Caco-2 (cell line): ENCODE measurements at regions of chr2 and their contacts with region 1.

Region 1: DNA sequence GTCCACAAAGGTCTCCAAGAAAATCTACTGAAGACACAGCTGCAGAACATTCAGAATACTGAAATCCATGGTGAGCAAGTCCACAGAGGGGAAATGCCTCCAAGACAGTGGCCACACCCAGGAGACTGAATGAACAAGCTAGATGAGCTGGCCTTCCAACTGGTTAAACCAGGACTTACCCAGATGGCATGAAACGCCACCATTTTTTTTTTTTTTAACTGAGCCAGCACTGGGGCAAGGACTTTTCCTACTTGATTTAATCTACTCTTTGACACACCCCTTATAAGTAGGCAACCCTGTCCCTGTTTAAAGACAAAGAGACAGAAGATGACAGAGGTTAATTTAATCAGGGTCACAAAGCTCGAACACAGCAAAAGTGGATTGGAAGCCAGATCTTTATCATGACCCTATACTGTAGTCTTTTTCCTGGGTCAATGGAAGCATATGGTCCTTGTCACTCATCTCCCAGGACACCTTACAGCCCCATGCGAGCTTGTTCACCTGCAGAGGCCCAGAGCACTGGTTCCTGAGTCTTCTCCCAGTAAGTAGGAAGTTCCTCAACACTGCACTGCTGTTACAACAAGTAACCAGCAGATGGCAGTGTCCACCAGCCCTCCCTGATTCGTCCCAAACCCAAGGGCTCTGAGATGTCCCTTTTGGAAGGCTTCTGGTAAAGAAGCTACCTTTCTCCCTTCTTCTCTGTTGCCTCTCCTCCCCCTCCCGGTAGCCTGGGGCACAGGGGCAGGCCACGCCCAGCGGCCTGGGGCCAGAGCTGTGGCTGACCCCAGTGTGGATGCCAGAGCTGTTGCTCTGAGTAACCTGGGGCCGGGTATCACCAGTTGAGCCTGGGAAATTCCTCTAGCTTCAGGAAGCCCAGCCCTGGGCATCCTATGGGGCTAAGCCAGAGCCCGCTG is 5.6 kb upstream of the GDF7 start:
- DNase-seq: peak; percentile 77 to 83
- H3K4me3 ChIP-seq: no peak overlapping the region
- H3K4me3 Mint-ChIP-seq: no peak overlapping the region
- H3K27ac Mint-ChIP-seq: no peak overlapping the region
- H3K4me1 ChIP-seq: peaks cover 10% of the 10 kb centered on the region; the same call in 1 of the 2 replicates
- H3K4me1 Mint-ChIP-seq: no peaks in the 10 kb centered on the region
- H3K27me3 ChIP-seq: no peaks in the 10 kb centered on the region
- H3K27me3 Mint-ChIP-seq: peaks cover 4% of the 10 kb centered on the region
- CTCF ChIP-seq: peak; percentile 95 to 96

Region 2: GRCh38 chr2:20675701-20676352 is 14.5 kb after region 1 on chr2:
- CTCF ChIA-PET with region 1: interaction called, 281 read pairs
- POLR2A ChIA-PET with region 1: interaction called, 13 read pairs
- intact Hi-C with region 1: loop called (anchors 1 kb)
- DNase-seq: peak; percentile 79 to 80
- H3K4me3 ChIP-seq: no peak overlapping the region
- H3K4me3 Mint-ChIP-seq: peak overlapping the region; percentile 42
- H3K27ac Mint-ChIP-seq: peak overlapping the region; percentile 69
- H3K4me1 ChIP-seq: peaks cover 15% of the 10 kb centered on the region
- H3K4me1 Mint-ChIP-seq: peaks cover 25% of the 10 kb centered on the region
- H3K27me3 ChIP-seq: no peaks in the 10 kb centered on the region
- H3K27me3 Mint-ChIP-seq: no peaks in the 10 kb centered on the region
- CTCF ChIP-seq: peak in 1 of 2 experiments; percentile 32

Region 3: DNA sequence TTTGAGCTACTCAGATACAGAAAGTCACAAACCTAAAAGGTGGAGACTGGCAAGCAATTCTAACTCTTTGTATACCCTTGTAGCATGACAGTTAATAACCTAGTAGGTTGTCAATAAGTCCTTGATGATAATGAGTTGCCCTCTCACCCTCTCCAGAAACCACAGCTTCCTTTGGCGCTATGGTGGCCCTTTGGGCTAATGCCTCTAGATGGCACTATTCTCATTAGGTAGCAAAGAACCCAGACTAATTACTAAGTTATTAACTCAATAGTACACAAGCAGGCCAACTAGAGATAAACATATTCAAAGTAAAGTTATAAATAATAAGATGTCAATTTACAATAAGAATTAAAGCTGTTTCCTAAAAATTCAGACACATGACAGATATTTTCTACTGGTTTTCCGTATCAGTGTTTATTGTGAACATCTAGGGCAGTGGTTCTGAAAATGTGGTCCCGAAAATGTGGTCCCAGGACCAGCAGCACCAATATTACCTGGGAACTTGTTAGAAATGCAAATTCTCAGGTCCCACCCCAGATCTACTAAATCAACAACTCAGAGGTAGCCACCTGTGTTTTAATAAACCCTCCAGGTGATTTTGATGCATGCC is 120.4 kb after region 1 on chr2:
- CTCF ChIA-PET with region 1: interaction called, 15 read pairs
- POLR2A ChIA-PET with region 1: no interaction called
- intact Hi-C with region 1: no loop called
- DNase-seq: peak in 1 of 2 experiments; percentile 43
- H3K4me3 ChIP-seq: no peak overlapping the region
- H3K4me3 Mint-ChIP-seq: no peak overlapping the region
- H3K27ac Mint-ChIP-seq: no peak overlapping the region
- H3K4me1 ChIP-seq: peaks cover 7% of the 10 kb centered on the region; the same call in 1 of the 2 replicates
- H3K4me1 Mint-ChIP-seq: peaks cover 15% of the 10 kb centered on the region
- H3K27me3 ChIP-seq: no peaks in the 10 kb centered on the region
- H3K27me3 Mint-ChIP-seq: no peaks in the 10 kb centered on the region
- CTCF ChIP-seq: peak; percentile 57 to 75

Region 4: DNA sequence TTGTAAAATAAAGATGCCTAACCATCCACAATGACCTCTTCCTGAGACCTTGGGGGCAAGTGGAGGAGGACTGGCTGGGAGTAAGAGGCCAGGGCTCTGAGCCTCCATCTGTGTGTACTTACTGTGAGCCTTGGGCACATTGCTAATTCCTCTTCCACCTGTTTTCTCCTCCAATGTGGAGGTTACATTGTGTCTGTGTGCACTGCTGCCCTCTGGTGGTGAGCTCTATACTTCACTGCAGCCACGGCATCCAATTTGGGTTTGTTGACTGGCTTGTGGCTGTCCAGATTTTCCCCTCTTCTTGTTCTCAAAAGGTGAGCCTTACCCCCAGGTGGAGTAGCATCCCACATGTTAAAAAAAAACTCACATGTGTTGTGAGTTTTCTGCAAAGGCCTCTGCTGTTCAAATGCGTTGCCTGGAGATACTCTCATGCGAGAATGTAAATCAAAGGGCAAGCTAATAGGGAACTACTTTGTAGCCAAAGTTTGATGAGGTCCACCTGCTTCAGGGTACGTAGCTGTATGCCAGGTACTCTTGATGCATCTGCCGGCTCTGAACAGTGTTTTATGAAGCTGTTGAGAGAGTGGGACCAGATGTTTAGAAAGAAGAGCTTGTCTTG is 301.7 kb after region 1 on chr2:
- CTCF ChIA-PET with region 1: interaction called, 41 read pairs
- POLR2A ChIA-PET with region 1: no interaction called
- intact Hi-C with region 1: loop called (anchors 1 kb)
- DNase-seq: peak; percentile 73 to 80
- H3K4me3 ChIP-seq: no peak overlapping the region
- H3K4me3 Mint-ChIP-seq: no peak overlapping the region
- H3K27ac Mint-ChIP-seq: no peak overlapping the region
- H3K4me1 ChIP-seq: no peaks in the 10 kb centered on the region
- H3K4me1 Mint-ChIP-seq: no peaks in the 10 kb centered on the region
- H3K27me3 ChIP-seq: no peaks in the 10 kb centered on the region; the same call in 1 of the 2 replicates
- H3K27me3 Mint-ChIP-seq: peaks cover 5% of the 10 kb centered on the region
- CTCF ChIP-seq: peak; percentile 83 to 90

Region 5: DNA sequence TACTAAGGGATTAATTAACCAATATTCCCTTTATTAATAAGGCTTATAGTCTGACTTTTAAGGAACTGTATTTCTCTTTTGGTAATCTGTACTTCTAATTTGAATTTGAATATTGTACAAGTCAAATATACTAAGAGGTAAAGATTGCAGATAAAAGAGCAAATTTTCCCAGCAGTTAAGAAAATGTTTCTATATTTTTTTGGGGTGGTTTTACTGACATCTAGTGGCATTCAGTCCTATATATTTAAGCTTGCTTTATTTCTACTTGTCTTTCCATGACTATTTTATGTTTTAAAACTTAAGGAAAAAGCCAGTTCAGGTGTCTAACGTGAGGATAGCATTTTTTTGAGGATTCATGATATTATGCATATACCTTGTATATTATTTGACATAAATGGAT is 504.0 kb after region 1 on chr2:
- CTCF ChIA-PET with region 1: interaction called, 4 read pairs
- POLR2A ChIA-PET with region 1: no interaction called
- intact Hi-C with region 1: loop called (anchors 1 kb)
- DNase-seq: no peak
- H3K4me3 ChIP-seq: no peak overlapping the region
- H3K4me3 Mint-ChIP-seq: no peak overlapping the region
- H3K27ac Mint-ChIP-seq: no peak overlapping the region
- H3K4me1 ChIP-seq: no peaks in the 10 kb centered on the region
- H3K4me1 Mint-ChIP-seq: no peaks in the 10 kb centered on the region
- H3K27me3 ChIP-seq: no peaks in the 10 kb centered on the region
- H3K27me3 Mint-ChIP-seq: no peaks in the 10 kb centered on the region
- CTCF ChIP-seq: peak; percentile 41 to 50